ENCODE measurements at regions of chr10 and their contacts with region 1.

Region 1: DNA sequence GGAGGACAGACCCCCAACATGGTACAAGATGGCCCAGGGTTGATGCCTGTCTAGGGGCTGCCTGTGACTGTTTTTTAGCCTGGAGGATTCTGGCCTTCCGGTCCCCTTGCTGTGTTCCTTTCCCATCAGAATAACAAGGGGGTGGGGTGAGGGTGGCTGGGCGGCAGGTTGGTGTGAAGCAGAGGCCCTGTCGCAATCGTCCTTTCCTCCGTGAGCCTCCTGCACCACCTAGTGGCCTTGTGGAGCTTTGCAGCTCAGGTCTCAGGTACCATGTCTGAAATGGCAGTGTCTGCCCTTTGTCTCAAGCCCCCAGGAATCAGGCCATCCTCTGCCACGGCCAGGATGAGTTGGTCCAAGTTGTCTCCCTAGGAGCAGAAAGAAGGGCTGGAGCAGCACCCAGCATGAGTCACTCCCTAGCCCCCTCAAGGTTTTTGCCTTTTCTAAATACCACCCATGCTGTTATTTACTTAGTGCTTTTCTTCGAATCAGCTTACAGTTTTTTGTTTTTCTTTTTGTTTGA is 24.2 kb downstream of the TACR2 start:
- DNase-seq: peak; percentile 83 to 84 (median 84)
- ATAC-seq: peak; percentile 99 to 100 (median 100)
- H3K4me3 ChIP-seq: no peak overlapping the region
- H3K27ac ChIP-seq: no peak overlapping the region
- H3K4me1 ChIP-seq: no peaks in the 10 kb centered on the region
- H3K27me3 ChIP-seq: no peaks in the 10 kb centered on the region
- CTCF ChIP-seq: peak; percentile 89 to 95 (median 92)
- POLR2A ChIP-seq: no peak

Region 2: GRCh38 chr10:69209787-69210484 is 182.6 kb before region 1 on chr10:
- intact Hi-C with region 1: no loop called
- DNase-seq: no peak
- ATAC-seq: peak in 1 of 4 donors; percentile 85
- H3K4me3 ChIP-seq: no peak overlapping the region
- H3K27ac ChIP-seq: no peak overlapping the region
- H3K4me1 ChIP-seq: no peaks in the 10 kb centered on the region
- H3K27me3 ChIP-seq: no peaks in the 10 kb centered on the region
- CTCF ChIP-seq: no peak
- POLR2A ChIP-seq: no peak

Region 3: DNA sequence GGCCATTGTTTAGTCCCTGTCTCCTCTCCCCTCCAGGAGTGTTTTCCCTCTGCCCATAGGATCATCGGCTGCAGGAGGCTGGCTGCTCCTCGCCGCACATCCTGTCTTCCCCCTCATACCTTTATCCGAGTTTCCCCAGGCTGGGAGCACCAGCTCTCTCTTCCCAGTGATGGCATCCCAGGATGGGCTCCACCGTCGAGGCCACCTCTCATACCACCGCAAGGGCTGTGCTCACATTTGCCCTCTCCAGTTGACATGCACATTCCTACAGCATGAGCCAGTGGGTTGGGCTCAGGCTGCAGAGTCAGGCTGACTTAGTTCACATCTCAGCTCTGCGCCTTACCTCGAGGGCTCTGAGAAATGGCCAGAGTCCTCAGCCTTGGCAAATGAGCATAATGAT is 160.3 kb before region 1 on chr10:
- intact Hi-C with region 1: loop called in 1 of 2 experiments (anchors 5 kb)
- DNase-seq: no peak
- ATAC-seq: no peak
- H3K4me3 ChIP-seq: no peak overlapping the region
- H3K27ac ChIP-seq: no peak overlapping the region
- H3K4me1 ChIP-seq: no peaks in the 10 kb centered on the region
- H3K27me3 ChIP-seq: no peaks in the 10 kb centered on the region
- CTCF ChIP-seq: no peak
- POLR2A ChIP-seq: no peak

Region 4: DNA sequence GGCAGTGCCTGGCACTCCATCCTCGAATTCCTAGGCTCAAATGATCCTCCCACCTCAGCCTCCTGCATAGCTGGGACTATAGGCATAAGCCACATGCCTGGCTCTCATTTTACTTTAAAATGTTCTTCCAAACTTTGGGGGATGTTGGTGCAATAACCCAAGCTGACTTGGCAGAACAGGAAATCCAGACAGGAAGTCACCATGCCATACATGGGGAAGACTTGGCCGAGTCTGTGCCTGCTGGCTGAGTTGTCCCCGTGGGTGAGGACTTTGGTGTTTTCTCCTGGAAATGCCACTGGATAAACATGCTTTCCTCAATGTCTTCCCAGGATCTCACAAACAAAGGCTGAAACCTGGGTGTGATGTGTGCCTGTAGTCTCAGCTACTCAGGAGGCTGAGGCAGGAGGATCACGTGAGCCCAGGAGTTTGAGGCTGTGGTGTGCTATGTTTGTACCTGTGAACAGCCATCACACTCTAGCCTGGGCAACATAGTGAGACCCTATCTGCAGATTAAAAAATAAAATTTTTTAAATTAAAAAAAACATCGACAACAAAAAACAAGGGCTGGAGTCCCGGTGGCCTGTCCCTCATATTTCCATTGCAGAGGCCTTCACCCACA is 152.6 kb before region 1 on chr10:
- intact Hi-C with region 1: loop called in 1 of 2 experiments (anchors 5 kb)
- DNase-seq: no peak
- ATAC-seq: peak in 1 of 4 donors; percentile 17
- H3K4me3 ChIP-seq: no peak overlapping the region
- H3K27ac ChIP-seq: no peak overlapping the region
- H3K4me1 ChIP-seq: no peaks in the 10 kb centered on the region
- H3K27me3 ChIP-seq: no peaks in the 10 kb centered on the region
- CTCF ChIP-seq: no peak
- POLR2A ChIP-seq: no peak